Activated CD4-positive, alpha-beta T cell treated with anti-CD3 and anti-CD28 coated beads for 36 hours (primary cell): ENCODE measurements at regions of chr16 and their contacts with region 1.

Region 1: GRCh38 chr16:58000706-58001676 is at the start of gene USB1:
- DNase-seq: peak; percentile 89
- ATAC-seq: peak; percentile 79
- H3K4me3 Mint-ChIP-seq: peak within 1 kb of the TSS; percentile 91
- H3K27ac Mint-ChIP-seq: peak within 1 kb of the TSS; percentile 80
- H3K4me1 Mint-ChIP-seq: peaks cover 41% of the 10 kb centered on the region
- H3K27me3 Mint-ChIP-seq: no peaks in the 10 kb centered on the region
- total RNA-seq, gene USB1: 37.3 to 38.5 TPM

Region 2: GRCh38 chr16:56356276-56357240 is 1644.4 kb before region 1 on chr16:
- CTCF ChIA-PET with region 1: no interaction called
- POLR2A ChIA-PET with region 1: no interaction called
- intact Hi-C with region 1: loop called in 1 of 2 experiments (anchors 5 kb)
- DNase-seq: peak; percentile 77
- ATAC-seq: peak; percentile 84
- H3K4me3 Mint-ChIP-seq: peak overlapping the region; percentile 78
- H3K27ac Mint-ChIP-seq: peak overlapping the region; percentile 98
- H3K4me1 Mint-ChIP-seq: peaks cover 29% of the 10 kb centered on the region
- H3K27me3 Mint-ChIP-seq: no peaks in the 10 kb centered on the region

Region 3: GRCh38 chr16:57535680-57536305 is 465.2 kb before region 1 on chr16:
- CTCF ChIA-PET with region 1: no interaction called
- POLR2A ChIA-PET with region 1: no interaction called
- intact Hi-C with region 1: loop called in 1 of 2 experiments (anchors 5 kb)
- DNase-seq: peak; percentile 97
- ATAC-seq: peak; percentile 80
- H3K4me3 Mint-ChIP-seq: peak overlapping the region; percentile 78
- H3K27ac Mint-ChIP-seq: peak overlapping the region; percentile 94
- H3K4me1 Mint-ChIP-seq: peaks cover 70% of the 10 kb centered on the region
- H3K27me3 Mint-ChIP-seq: no peaks in the 10 kb centered on the region

Region 4: DNA sequence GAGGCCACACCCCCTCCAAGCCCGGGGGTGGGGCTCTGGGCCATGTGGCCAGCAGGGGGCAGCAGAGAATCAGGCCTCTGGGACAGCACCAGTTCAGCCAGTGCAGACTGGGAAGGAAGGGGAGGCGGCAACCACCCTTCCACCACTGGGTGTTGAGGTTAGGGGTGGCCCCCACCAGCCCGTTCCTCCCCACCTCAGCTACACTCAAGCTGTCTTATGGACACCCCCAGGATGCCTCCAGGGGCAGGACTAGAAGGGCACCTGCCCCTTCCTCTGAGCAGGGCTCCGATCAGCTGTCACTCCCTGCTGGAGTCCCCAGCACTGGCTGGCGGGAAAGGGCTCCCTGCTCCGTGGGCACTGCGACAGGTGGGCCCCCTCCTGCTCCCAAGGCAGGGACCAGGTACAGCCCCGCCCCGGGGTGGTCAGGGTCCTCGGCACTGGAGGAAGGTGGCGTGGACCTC is 243.6 kb before region 1 on chr16:
- CTCF ChIA-PET with region 1: interaction called, 4 read pairs
- POLR2A ChIA-PET with region 1: no interaction called
- intact Hi-C with region 1: loop called (anchors 1 kb)
- DNase-seq: peak; percentile 93
- ATAC-seq: peak; percentile 98
- H3K4me3 Mint-ChIP-seq: no peak overlapping the region
- H3K27ac Mint-ChIP-seq: no peak overlapping the region
- H3K4me1 Mint-ChIP-seq: peaks cover 2% of the 10 kb centered on the region
- H3K27me3 Mint-ChIP-seq: no peaks in the 10 kb centered on the region

Region 5: GRCh38 chr16:57826706-57827625 is 174.0 kb before region 1 on chr16:
- CTCF ChIA-PET with region 1: no interaction called
- POLR2A ChIA-PET with region 1: no interaction called
- intact Hi-C with region 1: no loop called
- DNase-seq: no peak
- ATAC-seq: no peak
- H3K4me3 Mint-ChIP-seq: no peak overlapping the region
- H3K27ac Mint-ChIP-seq: no peak overlapping the region
- H3K4me1 Mint-ChIP-seq: no peaks in the 10 kb centered on the region
- H3K27me3 Mint-ChIP-seq: peaks cover 4% of the 10 kb centered on the region

Region 6: GRCh38 chr16:57984331-57985203 is 16.4 kb before region 1 on chr16:
- CTCF ChIA-PET with region 1: interaction called, 3 read pairs
- POLR2A ChIA-PET with region 1: no interaction called
- intact Hi-C with region 1: loop called (anchors 1 kb)
- DNase-seq: peak; percentile 97
- ATAC-seq: peak; percentile 100
- H3K4me3 Mint-ChIP-seq: peak overlapping the region; percentile 76
- H3K27ac Mint-ChIP-seq: no peak overlapping the region
- H3K4me1 Mint-ChIP-seq: peaks cover 7% of the 10 kb centered on the region
- H3K27me3 Mint-ChIP-seq: no peaks in the 10 kb centered on the region

Region 7: GRCh38 chr16:58054289-58054688 is 53.3 kb after region 1 on chr16:
- CTCF ChIA-PET with region 1: no interaction called
- POLR2A ChIA-PET with region 1: no interaction called
- intact Hi-C with region 1: no loop called
- DNase-seq: peak; percentile 13
- ATAC-seq: peak; percentile 82
- H3K4me3 Mint-ChIP-seq: no peak overlapping the region
- H3K27ac Mint-ChIP-seq: no peak overlapping the region
- H3K4me1 Mint-ChIP-seq: no peaks in the 10 kb centered on the region
- H3K27me3 Mint-ChIP-seq: no peaks in the 10 kb centered on the region

Region 8: GRCh38 chr16:58249780-58250478 is 248.9 kb after region 1 on chr16:
- CTCF ChIA-PET with region 1: no interaction called
- POLR2A ChIA-PET with region 1: no interaction called
- intact Hi-C with region 1: loop called in 1 of 2 experiments (anchors 1 kb)
- DNase-seq: peak; percentile 92
- ATAC-seq: peak; percentile 98
- H3K4me3 Mint-ChIP-seq: peak overlapping the region; percentile 81
- H3K27ac Mint-ChIP-seq: peak overlapping the region; percentile 85
- H3K4me1 Mint-ChIP-seq: peaks cover 8% of the 10 kb centered on the region
- H3K27me3 Mint-ChIP-seq: no peaks in the 10 kb centered on the region